Right ventricle myocardium inferior (tissue), 1 donor: ENCODE measurements at regions of chr11 and their contacts with region 1.

Region 1: GRCh38 chr11:111601979-111602864 is at the start of gene SIK2:
- DNase-seq: peak; percentile 97
- ATAC-seq: peak; percentile 97
- total RNA-seq, gene SIK2: 15.9 TPM

Region 2: GRCh38 chr11:111652184-111652583 is 50.0 kb after region 1 on chr11:
- intact Hi-C with region 1: loop called (anchors 5 kb)
- DNase-seq: no peak
- ATAC-seq: no peak

Region 3: GRCh38 chr11:111777094-111778046 is 175.1 kb after region 1 on chr11:
- intact Hi-C with region 1: loop called (anchors 1 kb)
- DNase-seq: no peak
- ATAC-seq: peak; percentile 76

Region 4: GRCh38 chr11:111977146-111978027 is 375.2 kb after region 1 on chr11:
- intact Hi-C with region 1: loop called (anchors 5 kb)
- DNase-seq: peak; percentile 79
- ATAC-seq: peak; percentile 81